PC-3 (cell line): ENCODE measurements at regions of chr6 and their contacts with region 1.

Region 1: DNA sequence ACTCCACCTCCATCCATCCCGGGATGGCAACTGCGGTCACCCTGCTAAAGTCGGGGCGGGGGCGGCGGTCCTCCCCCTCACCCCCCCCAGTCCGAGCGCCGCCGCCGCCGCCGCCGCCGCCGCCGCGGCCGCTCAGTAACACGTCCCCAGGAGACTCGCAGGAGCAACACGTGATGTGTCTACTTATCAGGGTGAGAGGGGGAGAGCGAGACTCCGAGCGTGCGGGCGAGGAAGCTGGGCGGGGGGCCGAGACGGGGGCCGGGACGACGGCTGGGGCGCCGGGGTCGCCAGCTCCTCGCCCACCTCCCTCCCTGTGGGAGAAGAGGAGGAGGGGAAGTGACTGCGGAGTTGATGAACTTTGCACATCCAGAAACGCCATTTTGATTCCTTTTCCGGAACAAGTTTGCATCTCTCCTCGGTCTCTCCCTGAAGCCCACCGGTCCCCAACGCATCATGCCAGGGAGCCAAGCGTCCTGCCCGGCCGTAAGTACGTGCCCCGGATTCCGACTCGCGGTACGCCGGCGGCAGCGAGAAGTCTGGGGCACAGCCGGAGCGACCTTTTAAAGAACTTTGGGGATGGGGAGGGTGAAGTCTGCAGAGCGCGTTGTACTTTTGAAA is at the start of gene RREB1:
- DNase-seq: peak; percentile 49
- ATAC-seq: peak; percentile 50
- H3K4me3 ChIP-seq: peak within 1 kb of the TSS; percentile 97
- H3K27ac ChIP-seq: peak within 1 kb of the TSS; percentile 86
- H3K4me1 ChIP-seq: peaks cover 30% of the 10 kb centered on the region
- H3K27me3 ChIP-seq: no peaks in the 10 kb centered on the region
- CTCF ChIP-seq: no peak
- total RNA-seq, gene RREB1: 26.0 and 31.8 TPM in 2 replicates

Region 2: DNA sequence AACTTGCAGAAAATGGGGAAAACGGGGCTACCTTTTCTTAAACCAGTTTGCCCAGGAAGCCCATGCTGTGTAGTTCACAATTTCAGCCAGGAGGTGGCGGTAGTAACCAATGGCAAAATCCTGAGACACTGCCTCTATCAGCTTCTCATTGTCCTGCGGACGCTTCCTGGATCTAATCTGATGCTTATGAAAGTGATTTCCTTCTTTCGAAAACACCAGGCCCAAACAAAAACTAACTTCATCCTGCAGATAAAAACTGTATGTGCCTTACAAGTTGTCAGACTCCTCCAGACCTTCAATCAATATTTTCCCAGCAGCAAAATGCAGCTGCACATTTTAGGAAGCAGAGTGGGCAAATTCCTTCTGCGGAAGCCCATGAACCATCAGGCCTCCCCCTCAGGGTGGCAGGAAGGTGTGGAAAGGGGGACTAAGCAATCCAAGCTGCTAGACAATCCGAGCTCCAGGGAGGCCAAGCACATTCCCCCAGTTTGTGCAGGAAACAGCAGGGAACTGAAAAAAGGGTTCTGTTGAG is 430.7 kb before region 1 on chr6:
- CTCF ChIA-PET with region 1: no interaction called
- POLR2A ChIA-PET with region 1: no interaction called
- intact Hi-C with region 1: loop called (anchors 5 kb)
- DNase-seq: peak; percentile 93
- ATAC-seq: peak; percentile 74
- H3K4me3 ChIP-seq: no peak overlapping the region
- H3K27ac ChIP-seq: peak overlapping the region; percentile 36
- H3K4me1 ChIP-seq: peaks cover 17% of the 10 kb centered on the region
- H3K27me3 ChIP-seq: peaks cover 4% of the 10 kb centered on the region; the same call in 1 of the 2 replicates
- CTCF ChIP-seq: peak; percentile 96

Region 3: DNA sequence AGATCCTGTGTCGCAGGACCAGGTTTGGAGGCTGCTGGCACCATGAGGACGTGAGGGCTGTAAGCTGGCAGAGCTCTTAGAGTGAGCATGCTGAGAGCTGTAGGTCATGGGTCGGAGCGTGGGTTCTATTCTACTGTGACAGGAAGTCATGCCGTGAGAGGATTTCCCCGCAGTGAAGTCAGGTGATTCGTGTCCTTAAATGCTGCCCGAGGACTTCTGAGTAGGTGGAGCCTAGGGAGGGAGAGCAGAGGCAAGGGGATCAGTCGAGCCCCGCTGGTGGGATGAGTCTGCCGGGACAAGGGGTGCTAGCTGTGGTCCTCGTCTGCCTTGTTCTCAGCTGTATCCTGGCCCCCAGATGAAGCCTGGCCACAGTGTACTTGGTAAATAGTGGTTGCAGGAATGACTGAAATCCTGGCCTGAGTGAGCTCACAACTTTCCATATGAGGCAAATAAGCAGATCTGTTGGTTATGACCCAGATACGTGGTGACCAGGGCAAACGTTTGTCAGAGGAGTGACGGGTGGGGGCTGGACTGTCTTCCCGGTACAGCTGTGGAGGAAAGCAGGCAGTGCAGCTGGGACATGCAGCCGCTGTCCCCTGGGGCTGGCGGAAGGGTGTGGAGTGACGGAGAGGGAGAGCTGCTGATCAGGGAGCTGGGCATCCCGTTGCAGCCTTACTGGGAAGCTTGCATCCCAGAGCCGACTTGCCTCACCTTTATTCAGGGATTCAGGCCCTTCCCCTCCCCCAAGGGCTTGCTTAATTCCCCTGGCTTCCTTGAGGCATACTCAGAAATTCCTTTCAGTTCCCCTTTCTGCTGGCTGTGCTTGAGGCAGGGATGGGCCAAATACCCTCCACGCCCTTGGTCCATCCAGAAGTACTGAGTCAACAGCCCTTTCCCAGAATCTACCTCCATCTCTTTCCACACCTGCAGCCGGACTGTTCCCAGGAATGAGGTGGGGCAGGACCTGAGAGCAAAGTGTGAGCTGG is 250.9 kb before region 1 on chr6:
- CTCF ChIA-PET with region 1: no interaction called
- POLR2A ChIA-PET with region 1: no interaction called
- intact Hi-C with region 1: loop called (anchors 5 kb)
- DNase-seq: peak; percentile 98
- ATAC-seq: peak; percentile 81
- H3K4me3 ChIP-seq: peak overlapping the region; percentile 36
- H3K27ac ChIP-seq: peak overlapping the region; percentile 96
- H3K4me1 ChIP-seq: peaks cover 29% of the 10 kb centered on the region
- H3K27me3 ChIP-seq: no peaks in the 10 kb centered on the region
- CTCF ChIP-seq: no peak

Region 4: GRCh38 chr6:7051233-7052114 is 56.2 kb before region 1 on chr6:
- CTCF ChIA-PET with region 1: no interaction called
- POLR2A ChIA-PET with region 1: interaction called, 7 read pairs
- intact Hi-C with region 1: loop called (anchors 2 kb)
- DNase-seq: peak; percentile 60
- ATAC-seq: peak; percentile 45
- H3K4me3 ChIP-seq: peak overlapping the region; percentile 79
- H3K27ac ChIP-seq: peak overlapping the region; percentile 96
- H3K4me1 ChIP-seq: peaks cover 50% of the 10 kb centered on the region
- H3K27me3 ChIP-seq: no peaks in the 10 kb centered on the region
- CTCF ChIP-seq: no peak

Region 5: GRCh38 chr6:7058250-7058923 is 49.3 kb before region 1 on chr6:
- CTCF ChIA-PET with region 1: interaction called, 3 read pairs
- POLR2A ChIA-PET with region 1: interaction called, 6 read pairs
- intact Hi-C with region 1: loop called (anchors 2 kb)
- DNase-seq: peak; percentile 98
- ATAC-seq: peak; percentile 97
- H3K4me3 ChIP-seq: no peak overlapping the region
- H3K27ac ChIP-seq: peak overlapping the region; percentile 91
- H3K4me1 ChIP-seq: peaks cover 49% of the 10 kb centered on the region
- H3K27me3 ChIP-seq: no peaks in the 10 kb centered on the region
- CTCF ChIP-seq: no peak

Region 6: DNA sequence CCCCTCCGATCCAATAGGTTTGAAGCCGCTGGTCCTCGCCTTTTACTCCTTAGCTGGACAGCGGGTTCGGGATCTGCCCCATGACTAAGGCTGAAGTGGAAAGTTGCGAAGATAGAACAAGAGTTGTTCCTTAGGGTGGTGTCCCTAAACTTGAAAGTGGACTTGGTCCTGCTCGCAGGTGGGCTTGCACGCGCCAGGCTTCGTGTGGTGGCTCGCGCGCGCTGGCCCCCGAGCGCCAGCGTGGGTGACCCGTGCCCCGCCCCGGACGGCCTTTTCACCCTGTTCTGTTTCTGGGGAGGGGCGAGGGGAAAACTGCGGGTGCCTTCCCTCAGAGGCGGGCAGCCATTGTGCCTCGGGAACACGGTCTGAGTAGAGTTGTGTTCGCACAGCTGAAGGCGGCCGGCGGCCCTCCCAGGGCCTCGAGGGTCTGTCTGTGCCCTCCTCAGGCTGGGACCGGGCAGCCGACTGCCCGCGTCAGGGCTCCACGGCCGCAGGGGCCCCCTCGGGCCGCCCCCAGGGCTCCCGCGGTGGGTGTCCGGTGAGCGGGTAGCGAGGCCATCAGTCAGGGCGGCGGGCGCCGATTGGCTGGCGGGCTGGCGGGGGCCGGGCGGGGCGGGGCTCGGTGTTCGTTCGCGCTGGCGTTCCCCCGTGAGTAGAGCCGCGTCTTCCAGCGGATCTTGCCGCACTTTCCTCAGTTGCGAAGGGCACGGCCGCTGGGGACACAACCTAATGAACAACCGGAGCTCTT is 33.1 kb after region 1 on chr6:
- CTCF ChIA-PET with region 1: no interaction called
- POLR2A ChIA-PET with region 1: interaction called, 4 read pairs
- intact Hi-C with region 1: loop called (anchors 5 kb)
- DNase-seq: peak; percentile 68
- ATAC-seq: peak; percentile 83
- H3K4me3 ChIP-seq: peak overlapping the region; percentile 74
- H3K27ac ChIP-seq: peak overlapping the region; percentile 71
- H3K4me1 ChIP-seq: peaks cover 52% of the 10 kb centered on the region
- H3K27me3 ChIP-seq: no peaks in the 10 kb centered on the region
- CTCF ChIP-seq: no peak

Region 7: GRCh38 chr6:7172649-7173048 is 65.0 kb after region 1 on chr6:
- CTCF ChIA-PET with region 1: no interaction called
- POLR2A ChIA-PET with region 1: no interaction called
- intact Hi-C with region 1: no loop called
- DNase-seq: no peak
- ATAC-seq: no peak
- H3K4me3 ChIP-seq: no peak overlapping the region
- H3K27ac ChIP-seq: no peak overlapping the region
- H3K4me1 ChIP-seq: no peaks in the 10 kb centered on the region
- H3K27me3 ChIP-seq: no peaks in the 10 kb centered on the region
- CTCF ChIP-seq: no peak

Region 8: GRCh38 chr6:7238900-7239589 is 131.4 kb after region 1 on chr6:
- CTCF ChIA-PET with region 1: no interaction called
- POLR2A ChIA-PET with region 1: no interaction called
- intact Hi-C with region 1: loop called (anchors 2 kb)
- DNase-seq: peak; percentile 83
- ATAC-seq: peak; percentile 34; the same call in 1 of the 2 replicates
- H3K4me3 ChIP-seq: no peak overlapping the region
- H3K27ac ChIP-seq: peak overlapping the region; percentile 18; the same call in 1 of the 2 replicates
- H3K4me1 ChIP-seq: peaks cover 55% of the 10 kb centered on the region
- H3K27me3 ChIP-seq: no peaks in the 10 kb centered on the region
- CTCF ChIP-seq: peak; percentile 87